ENCODE measurements at regions of chr4 and their contacts with region 1.

Region 1: DNA sequence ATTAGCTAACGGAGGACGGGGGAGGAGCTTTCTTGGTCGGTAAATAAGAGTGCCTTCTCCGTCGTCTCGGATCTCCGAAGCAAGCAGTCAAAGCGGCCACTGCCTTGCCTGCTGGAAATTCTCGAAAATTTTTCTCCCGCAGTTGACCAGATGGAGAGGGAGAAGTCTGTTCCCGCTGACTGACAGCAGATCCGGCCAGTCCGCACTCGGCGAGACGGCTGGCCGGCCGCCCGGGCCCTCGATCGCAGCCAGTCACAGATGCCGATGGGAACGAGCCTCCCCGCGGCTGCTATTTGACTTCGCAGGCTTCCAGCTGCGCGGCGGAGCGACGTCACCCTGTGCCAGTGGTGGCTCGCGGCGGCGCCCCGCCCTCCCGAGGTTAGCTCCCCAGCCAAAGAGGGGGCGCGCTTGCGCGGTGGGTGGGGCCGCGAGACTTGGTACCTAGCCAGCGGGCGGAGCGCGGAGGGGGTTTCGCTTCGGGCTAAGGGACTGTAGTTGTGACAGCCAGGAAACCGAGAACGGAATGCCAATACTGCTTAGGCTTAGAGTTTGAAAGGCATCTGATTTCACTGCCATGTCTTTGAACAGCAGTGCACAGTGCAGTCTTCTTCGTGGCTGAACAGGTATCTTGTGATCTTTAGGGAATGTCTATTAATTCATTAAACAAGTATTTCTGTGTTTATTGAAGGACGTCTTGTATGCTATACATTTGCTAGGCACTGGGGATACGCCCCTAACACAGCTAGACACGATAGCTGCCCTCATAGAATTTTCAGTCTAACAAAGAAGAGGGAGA is at the start of gene PPM1K:
- DNase-seq: peak; percentile 99
- H3K4me3 Mint-ChIP-seq: peak within 1 kb of the TSS; percentile 89
- H3K27ac Mint-ChIP-seq: peak within 1 kb of the TSS; percentile 98
- H3K4me1 Mint-ChIP-seq: peaks cover 34% of the 10 kb centered on the region
- H3K27me3 Mint-ChIP-seq: no peaks in the 10 kb centered on the region
- total RNA-seq, gene PPM1K: 54.1 to 55.2 TPM

Region 2: DNA sequence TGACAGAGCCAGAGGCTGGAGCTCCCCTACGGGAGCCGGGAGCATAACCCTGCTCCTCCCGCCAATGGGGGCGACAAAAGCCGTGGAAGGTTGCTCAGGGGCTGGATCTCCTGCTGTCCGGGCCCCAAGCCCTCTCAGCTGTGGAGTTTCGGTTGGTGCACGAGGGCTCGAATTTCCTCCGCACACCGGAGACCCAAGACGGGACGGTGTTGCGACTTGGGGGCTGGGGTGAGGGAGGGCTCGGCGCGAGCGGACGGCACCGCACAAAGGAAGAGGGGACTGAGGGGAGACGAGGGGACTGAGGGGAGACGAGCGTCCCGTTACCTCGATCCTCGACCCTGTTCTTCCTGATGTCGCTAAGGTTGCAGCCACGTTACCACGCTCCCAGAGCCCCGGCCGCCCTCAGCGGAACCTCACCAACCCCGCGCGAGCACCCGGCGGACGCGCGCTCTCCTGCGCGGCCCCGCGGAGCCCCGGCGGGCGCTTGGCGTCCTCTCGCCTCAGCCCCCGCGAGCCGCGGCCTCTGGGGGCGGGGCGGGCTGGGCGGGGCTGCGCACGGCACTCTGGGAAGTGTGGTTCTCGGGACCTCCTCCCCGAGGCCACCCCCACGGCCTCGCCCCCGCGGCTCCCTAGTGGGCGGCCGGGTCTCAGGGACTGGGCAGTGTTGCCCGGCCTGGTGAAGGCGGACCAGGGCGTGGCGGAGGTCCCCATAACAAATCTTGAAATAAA is 1064.4 kb before region 1 on chr4 and contains the start of gene KLHL8:
- CTCF ChIA-PET with region 1: no interaction called
- intact Hi-C with region 1: loop called (anchors 2 kb)
- DNase-seq: peak; percentile 85
- H3K4me3 Mint-ChIP-seq: peak within 1 kb of the TSS; percentile 84
- H3K27ac Mint-ChIP-seq: peak within 1 kb of the TSS; percentile 82
- H3K4me1 Mint-ChIP-seq: peaks cover 16% of the 10 kb centered on the region
- H3K27me3 Mint-ChIP-seq: no peaks in the 10 kb centered on the region
- total RNA-seq, gene KLHL8: 10.7 to 12.1 TPM

Region 3: DNA sequence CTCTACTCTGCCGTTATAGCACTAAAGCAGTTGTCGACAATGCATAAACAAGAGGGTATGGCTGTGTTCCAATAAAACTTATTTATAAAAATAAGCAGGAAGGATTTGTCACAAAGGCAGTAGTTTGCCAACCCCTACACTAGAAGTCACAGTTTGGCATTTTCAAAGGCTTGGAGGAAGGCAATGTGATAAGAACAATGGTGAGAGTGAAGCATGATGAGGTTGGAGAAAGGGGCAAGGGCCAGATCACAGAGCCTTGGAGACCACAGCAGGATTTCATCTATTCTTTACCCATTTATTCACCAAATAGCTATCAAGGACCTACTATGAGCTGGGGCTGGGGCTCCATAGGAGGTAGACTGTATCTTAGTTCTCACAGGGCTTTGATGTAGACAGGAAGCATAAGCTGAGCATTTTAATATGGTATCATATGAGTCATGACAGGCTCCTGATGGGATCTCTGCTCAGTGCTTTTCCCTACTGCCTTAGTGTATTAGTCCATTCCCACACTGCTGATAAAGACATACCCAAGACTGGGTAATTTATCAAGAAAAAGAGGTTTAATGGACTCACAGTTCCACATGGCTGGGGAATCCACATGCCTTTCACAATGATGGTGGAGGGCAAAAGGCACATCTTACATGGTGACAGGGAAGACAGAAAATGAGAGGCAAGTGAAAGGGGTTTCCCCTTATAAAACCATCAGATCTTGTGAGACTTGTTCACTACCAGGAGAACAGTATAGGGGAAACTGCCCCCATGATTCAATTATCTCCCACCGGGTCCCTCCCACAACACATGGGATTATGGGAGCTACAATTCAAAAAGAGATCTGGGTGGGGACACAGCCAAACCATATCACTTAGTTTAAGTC is 59.2 kb before region 1 on chr4:
- CTCF ChIA-PET with region 1: no interaction called
- intact Hi-C with region 1: loop called (anchors 1 kb)
- DNase-seq: peak; percentile 37
- H3K4me3 Mint-ChIP-seq: no peak overlapping the region
- H3K27ac Mint-ChIP-seq: peak overlapping the region; percentile 37
- H3K4me1 Mint-ChIP-seq: peaks cover 16% of the 10 kb centered on the region
- H3K27me3 Mint-ChIP-seq: no peaks in the 10 kb centered on the region

Region 4: GRCh38 chr4:88320780-88321373 is 36.2 kb after region 1 on chr4:
- CTCF ChIA-PET with region 1: interaction called, 8 read pairs
- intact Hi-C with region 1: loop called (anchors 1 kb)
- DNase-seq: peak; percentile 28
- H3K4me3 Mint-ChIP-seq: peak overlapping the region; percentile 49
- H3K27ac Mint-ChIP-seq: peak overlapping the region; percentile 59
- H3K4me1 Mint-ChIP-seq: peaks cover 15% of the 10 kb centered on the region
- H3K27me3 Mint-ChIP-seq: no peaks in the 10 kb centered on the region

Region 5: DNA sequence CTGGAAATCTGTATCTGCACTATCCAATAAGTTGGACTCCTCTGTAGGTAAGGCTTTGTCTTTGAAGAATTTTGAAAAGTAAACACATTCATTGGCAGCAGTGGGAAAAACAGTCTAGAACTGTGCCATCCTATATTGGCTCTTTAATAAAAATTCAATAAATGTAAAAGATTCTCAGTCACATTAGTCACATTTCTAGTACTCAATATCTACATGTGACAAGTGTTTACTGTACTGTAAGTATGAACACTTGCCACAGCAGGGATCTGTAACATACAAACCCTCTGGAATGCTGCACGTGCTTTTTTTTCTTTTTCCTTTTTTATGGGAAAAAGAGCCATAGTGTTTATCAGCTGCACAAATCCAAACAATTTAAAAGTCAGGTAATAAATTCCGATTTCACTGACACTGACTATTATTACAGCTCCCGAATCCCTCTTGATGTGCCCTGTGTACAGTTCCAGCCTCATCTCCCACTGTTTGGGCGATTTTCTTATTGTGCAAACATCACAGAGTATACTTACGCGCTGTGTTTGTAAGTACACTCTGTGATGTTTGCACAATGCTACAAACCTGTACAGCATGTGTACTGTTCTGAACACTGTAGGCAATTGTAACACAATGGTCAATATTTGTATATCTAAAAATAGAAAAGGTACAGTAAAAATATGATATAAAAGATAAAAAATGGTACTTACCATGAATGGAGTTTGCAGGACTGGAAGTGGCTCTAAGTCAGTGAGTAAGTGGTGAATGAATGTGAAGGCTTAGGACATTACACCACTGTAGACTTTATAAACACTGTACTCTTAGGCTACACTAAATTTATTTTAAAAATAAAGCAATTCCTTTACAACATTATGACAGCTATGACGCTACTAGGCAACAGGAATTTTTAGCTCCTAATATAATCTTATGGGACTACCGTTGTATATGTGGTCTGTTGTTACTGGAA is 230.2 kb after region 1 on chr4:
- CTCF ChIA-PET with region 1: interaction called, 3 read pairs
- intact Hi-C with region 1: loop called (anchors 2 kb)
- DNase-seq: no peak
- H3K4me3 Mint-ChIP-seq: no peak overlapping the region
- H3K27ac Mint-ChIP-seq: no peak overlapping the region
- H3K4me1 Mint-ChIP-seq: no peaks in the 10 kb centered on the region
- H3K27me3 Mint-ChIP-seq: no peaks in the 10 kb centered on the region

Region 6: DNA sequence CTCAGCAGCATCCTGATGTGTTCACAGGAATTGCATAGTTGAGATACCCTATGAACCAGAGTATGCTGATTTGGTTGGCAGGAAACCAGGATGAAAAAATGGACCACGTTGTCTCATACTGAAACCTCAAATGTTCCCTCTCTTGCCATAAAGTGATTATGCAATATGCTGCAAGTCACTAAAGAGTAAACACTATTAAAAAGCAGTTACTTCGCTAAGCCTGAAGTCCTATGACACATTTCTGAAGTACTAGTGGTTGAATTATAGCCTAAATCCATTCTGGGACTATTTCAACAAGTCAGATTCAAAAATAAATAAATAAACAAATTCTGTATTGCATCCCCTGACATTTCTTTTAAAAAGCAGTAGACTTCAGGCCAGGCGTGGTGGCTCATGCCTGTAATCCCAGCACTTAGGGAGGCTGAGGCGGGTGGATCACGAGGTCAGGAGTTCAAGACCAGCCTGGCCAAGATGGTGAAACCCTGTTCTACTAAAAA is 519.0 kb after region 1 on chr4:
- CTCF ChIA-PET with region 1: no interaction called
- intact Hi-C with region 1: loop called (anchors 5 kb)
- DNase-seq: peak; percentile 60
- H3K4me3 Mint-ChIP-seq: no peak overlapping the region
- H3K27ac Mint-ChIP-seq: no peak overlapping the region
- H3K4me1 Mint-ChIP-seq: peaks cover 22% of the 10 kb centered on the region
- H3K27me3 Mint-ChIP-seq: no peaks in the 10 kb centered on the region

Region 7: GRCh38 chr4:88919056-88919455 is 634.4 kb after region 1 on chr4:
- CTCF ChIA-PET with region 1: no interaction called
- intact Hi-C with region 1: no loop called
- DNase-seq: no peak
- H3K4me3 Mint-ChIP-seq: no peak overlapping the region
- H3K27ac Mint-ChIP-seq: no peak overlapping the region
- H3K4me1 Mint-ChIP-seq: no peaks in the 10 kb centered on the region
- H3K27me3 Mint-ChIP-seq: no peaks in the 10 kb centered on the region

Measured in activated naive CD4-positive, alpha-beta T cell treated with anti-CD3 and anti-CD28 coated beads for 36 hours (primary cell).